Sciatic nerve (tissue), 2 donors: ENCODE measurements at regions of chr2 and their contacts with region 1.

Region 1: DNA sequence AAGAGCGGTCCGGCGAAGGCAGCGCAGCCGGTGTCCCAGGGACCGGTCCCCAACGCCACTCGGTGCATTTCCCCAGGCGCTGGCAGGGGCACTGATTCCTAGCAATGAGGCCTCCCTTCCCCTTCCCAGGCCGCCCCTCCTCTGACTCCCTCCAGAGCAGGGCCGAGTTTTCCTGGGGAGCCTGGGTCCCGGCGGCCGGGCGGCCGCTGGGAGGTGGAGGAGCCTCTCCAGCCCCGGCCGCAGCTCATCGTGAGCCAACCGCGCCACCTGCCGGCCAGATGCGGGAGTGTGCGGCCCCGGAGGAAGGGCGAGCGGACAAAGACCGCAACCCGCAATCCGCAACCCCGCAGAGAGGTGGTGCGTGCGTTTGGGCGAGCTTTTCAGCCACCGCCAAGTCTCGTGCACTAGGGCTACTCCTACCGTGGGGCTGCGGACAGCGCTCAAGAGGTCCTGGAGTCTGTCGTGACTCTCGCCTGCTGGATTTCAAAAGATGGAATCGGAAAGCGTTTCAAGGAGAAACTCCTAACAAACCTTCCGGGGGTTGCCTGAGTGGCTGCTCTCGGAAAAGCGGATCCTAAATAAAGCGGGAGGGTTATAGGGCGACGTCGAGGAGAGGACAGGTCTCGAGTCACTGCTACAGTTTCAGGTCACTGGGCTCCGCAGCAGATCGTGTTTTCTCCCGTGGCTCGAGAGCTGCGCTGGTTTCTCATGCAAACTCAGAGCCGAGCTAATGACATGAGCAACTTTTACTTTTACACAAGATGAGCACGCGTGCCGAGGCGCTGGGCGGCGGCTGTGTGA is 1.5 kb upstream of the EPHA4 start:
- DNase-seq: peak; percentile 92
- ATAC-seq: peak; percentile 85

Region 2: GRCh38 chr2:219744600-219744999 is 1829.0 kb before region 1 on chr2:
- intact Hi-C with region 1: loop called (anchors 10 kb)
- DNase-seq: no peak
- ATAC-seq: no peak

Region 3: GRCh38 chr2:220687231-220687843 is 886.3 kb before region 1 on chr2:
- intact Hi-C with region 1: loop called (anchors 10 kb)
- DNase-seq: peak; percentile 83
- ATAC-seq: peak; percentile 86

Region 4: GRCh38 chr2:221624475-221624874 is 50.8 kb after region 1 on chr2:
- intact Hi-C with region 1: no loop called
- DNase-seq: no peak
- ATAC-seq: no peak